HAP-1 (cell line): ENCODE measurements at regions of chr1 and their contacts with region 1.

Region 1: GRCh38 chr1:47725992-47726855 is 271.0 kb downstream of the TRABD2B start:
- DNase-seq: peak; percentile 69 to 86
- H3K4me3 ChIP-seq: no peak overlapping the region
- H3K4me1 ChIP-seq: peaks cover 5% of the 10 kb centered on the region
- H3K27me3 ChIP-seq: no peaks in the 10 kb centered on the region; the same call in 1 of the 2 replicates

Region 2: GRCh38 chr1:47179017-47179987 is 546.9 kb before region 1 on chr1:
- in situ Hi-C with region 1: loop called (anchors 10 kb)
- DNase-seq: peak; percentile 93
- H3K4me3 ChIP-seq: peak overlapping the region; percentile 23
- H3K4me1 ChIP-seq: peaks cover 4% of the 10 kb centered on the region; the same call in 1 of the 2 replicates
- H3K27me3 ChIP-seq: no peaks in the 10 kb centered on the region; the same call in 1 of the 2 replicates

Region 3: DNA sequence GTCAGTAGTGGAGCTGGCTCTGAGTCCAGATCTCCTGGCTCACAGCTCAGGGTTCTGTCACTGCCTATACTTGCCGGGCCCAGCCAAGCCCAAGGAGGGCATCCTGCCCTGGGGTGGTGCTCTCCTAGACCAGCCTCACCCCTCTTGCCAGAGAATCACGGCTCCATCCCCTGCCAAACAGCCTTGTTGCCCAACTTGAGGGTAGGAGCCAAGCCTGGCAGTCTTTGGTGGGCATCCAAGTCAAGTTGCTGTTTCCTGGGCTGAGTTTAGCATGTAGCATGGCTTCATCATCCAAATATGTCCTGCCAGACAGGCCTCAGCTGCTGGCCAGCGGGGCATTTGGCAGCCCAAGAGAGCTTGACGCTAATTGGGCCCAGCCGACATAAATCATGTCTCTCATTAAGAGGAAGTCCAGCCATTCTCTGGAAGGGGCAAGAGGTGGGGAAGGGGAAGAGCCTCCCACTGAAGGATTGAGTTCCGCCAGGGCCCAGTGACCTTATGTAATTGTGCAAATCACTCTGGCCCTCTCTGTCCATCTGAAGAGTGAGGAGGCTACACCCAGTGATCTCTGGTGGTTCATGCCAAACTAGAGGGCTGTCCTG is 293.6 kb after region 1 on chr1:
- in situ Hi-C with region 1: no loop called
- DNase-seq: no peak
- H3K4me3 ChIP-seq: no peak overlapping the region
- H3K4me1 ChIP-seq: no peaks in the 10 kb centered on the region
- H3K27me3 ChIP-seq: peaks cover 3% of the 10 kb centered on the region; the same call in 1 of the 2 replicates

Region 4: GRCh38 chr1:48164571-48164970 is 438.3 kb after region 1 on chr1:
- in situ Hi-C with region 1: no loop called
- DNase-seq: no peak
- H3K4me3 ChIP-seq: no peak overlapping the region
- H3K4me1 ChIP-seq: no peaks in the 10 kb centered on the region
- H3K27me3 ChIP-seq: no peaks in the 10 kb centered on the region

Region 5: DNA sequence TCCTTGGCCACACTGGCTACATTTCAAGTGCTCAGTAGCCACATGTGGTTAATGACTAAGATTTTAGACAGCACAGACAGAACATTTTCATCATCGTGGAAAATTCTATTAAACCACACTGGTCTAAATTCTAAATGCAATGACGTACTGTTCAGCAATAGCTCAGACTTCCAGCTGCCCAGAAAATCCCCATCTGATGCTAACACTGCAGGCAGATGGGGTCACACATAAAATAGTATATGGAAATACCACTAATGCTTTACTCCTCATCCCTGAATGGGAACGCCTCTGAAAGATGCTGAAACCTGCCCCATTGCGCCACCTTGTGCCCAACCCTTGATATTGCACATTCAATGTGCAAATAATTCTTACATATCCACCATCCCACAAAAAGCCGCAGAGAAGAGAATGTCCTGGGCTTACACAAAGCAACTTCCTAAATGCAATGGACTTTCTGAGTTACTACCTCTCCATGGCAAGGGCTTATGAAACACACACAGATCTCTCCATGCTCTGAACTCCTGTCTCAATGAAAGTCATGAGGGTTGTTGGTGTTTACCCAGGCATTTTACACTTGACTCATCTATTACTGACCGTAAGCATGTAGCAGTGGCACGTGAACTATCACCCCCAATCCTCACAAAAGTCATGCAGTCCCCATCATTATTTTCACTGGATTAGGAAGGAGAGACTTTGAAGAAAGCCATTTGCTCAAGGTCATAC is 476.0 kb after region 1 on chr1:
- in situ Hi-C with region 1: loop called (anchors 25 kb)
- DNase-seq: peak; percentile 47 to 77
- H3K4me3 ChIP-seq: no peak overlapping the region
- H3K4me1 ChIP-seq: no peaks in the 10 kb centered on the region
- H3K27me3 ChIP-seq: no peaks in the 10 kb centered on the region